CD8-positive, alpha-beta T cell (primary cell): ENCODE measurements at regions of chr6 and their contacts with region 1.

Region 1: DNA sequence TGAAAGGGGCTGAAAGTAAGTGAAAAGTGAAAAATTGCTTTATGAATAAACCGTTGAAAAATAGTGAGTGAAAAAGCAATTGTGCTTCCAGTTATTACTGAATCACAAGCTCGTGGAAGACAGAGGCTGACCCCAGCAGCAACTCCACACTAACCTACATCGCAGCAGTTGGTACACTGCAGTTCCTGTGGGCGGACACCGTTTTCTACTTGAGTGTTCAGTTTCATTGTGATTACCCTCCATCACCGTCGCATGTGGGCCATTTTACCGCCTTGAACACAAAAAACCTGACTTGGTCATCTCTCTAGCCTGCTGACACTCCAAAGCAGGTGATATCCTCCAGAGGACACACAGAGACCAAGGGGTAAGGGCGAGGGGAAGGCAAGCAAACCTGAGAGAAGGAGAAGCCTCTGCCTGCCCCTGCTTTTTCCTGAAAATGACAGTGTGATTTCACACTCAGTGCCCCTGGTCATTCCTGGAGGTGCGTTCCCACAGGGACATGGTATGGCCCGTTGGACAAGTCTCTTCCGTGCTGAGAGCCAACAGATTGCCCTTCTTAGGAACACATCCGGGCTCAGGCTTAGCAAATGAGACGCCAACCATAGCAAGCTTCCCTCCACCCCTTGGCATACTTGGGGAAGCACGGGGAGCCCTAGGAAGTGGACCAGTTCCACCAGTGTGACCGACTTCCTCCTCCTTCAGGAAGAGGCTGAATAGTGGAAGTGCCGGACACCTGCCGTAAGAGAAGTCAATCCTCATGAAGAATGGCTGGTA is 28.5 kb downstream of the PRDM1 start:
- DNase-seq: peak in 3 of 9 experiments; percentile 37 to 66 (median 60)
- ATAC-seq: peak; percentile 15
- H3K4me3 ChIP-seq: peak overlapping the region in 1 of 2 experiments; percentile 7
- H3K4me3 Mint-ChIP-seq: peak overlapping the region; percentile 55
- H3K27ac ChIP-seq: peak overlapping the region in 1 of 2 experiments; percentile 61
- H3K27ac Mint-ChIP-seq: peak overlapping the region; percentile 58
- H3K4me1 ChIP-seq: peaks cover 55% of the 10 kb centered on the region
- H3K4me1 Mint-ChIP-seq: peaks cover 57% of the 10 kb centered on the region
- H3K27me3 ChIP-seq: no peaks in the 10 kb centered on the region
- H3K27me3 Mint-ChIP-seq: peaks cover 21% of the 10 kb centered on the region
- CTCF ChIP-seq: no peak

Region 2: GRCh38 chr6:105983763-105984162 is 130.9 kb before region 1 on chr6:
- CTCF ChIA-PET with region 1: no interaction called
- POLR2A ChIA-PET with region 1: no interaction called
- intact Hi-C with region 1: no loop called
- DNase-seq: no peak
- ATAC-seq: no peak
- H3K4me3 ChIP-seq: no peak overlapping the region
- H3K4me3 Mint-ChIP-seq: no peak overlapping the region
- H3K27ac ChIP-seq: no peak overlapping the region
- H3K27ac Mint-ChIP-seq: no peak overlapping the region
- H3K4me1 ChIP-seq: peaks cover 20% of the 10 kb centered on the region
- H3K4me1 Mint-ChIP-seq: peaks cover 20% of the 10 kb centered on the region
- H3K27me3 ChIP-seq: peaks cover 23 to 26% of the 10 kb centered on the region in 2 experiments
- H3K27me3 Mint-ChIP-seq: peaks cover 67% of the 10 kb centered on the region
- CTCF ChIP-seq: no peak

Region 3: DNA sequence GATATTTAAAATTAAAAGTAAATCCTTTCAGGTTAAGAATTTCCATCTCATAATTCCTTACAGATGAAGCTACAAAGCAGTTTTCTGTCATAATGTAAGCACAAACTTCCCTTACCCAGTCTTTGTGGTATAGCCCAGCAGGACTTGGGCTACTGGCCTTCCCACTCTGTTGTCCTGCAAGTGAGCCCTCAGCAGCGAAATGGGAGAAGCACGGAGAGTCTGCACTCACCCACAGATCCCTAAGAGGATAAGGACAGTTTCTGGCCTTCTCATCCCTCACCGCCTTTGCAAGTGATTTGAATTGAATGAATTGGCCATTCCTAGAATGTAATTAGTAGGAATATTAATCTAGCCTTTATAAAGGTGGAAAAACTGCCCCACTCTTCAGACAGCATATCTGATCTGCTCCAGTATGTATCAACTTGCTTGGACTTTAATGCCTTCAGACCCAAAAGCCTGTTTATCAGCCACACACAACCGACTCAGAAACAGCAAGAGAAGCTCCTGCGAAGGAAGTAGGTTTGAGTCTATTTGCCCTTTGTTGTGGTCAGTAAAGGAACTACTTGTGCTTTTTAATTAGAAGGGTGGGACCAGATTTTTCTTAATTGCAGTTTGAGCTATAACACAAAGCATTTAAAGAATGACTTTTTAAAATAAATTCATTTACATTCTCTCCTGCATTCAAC is 58.5 kb before region 1 on chr6:
- CTCF ChIA-PET with region 1: interaction called, 3 read pairs
- POLR2A ChIA-PET with region 1: no interaction called
- intact Hi-C with region 1: loop called in 1 of 2 experiments (anchors 5 kb)
- DNase-seq: peak in 3 of 9 experiments; percentile 8 to 68 (median 54)
- ATAC-seq: peak; percentile 67
- H3K4me3 ChIP-seq: no peak overlapping the region
- H3K4me3 Mint-ChIP-seq: peak overlapping the region; percentile 3
- H3K27ac ChIP-seq: no peak overlapping the region
- H3K27ac Mint-ChIP-seq: no peak overlapping the region
- H3K4me1 ChIP-seq: peaks cover 19% of the 10 kb centered on the region
- H3K4me1 Mint-ChIP-seq: peaks cover 17% of the 10 kb centered on the region
- H3K27me3 ChIP-seq: peaks cover 0 to 2% of the 10 kb centered on the region in 2 experiments
- H3K27me3 Mint-ChIP-seq: peaks cover 2% of the 10 kb centered on the region
- CTCF ChIP-seq: no peak

Region 4: GRCh38 chr6:106069478-106069877 is 45.2 kb before region 1 on chr6:
- CTCF ChIA-PET with region 1: no interaction called
- POLR2A ChIA-PET with region 1: no interaction called
- intact Hi-C with region 1: no loop called
- DNase-seq: no peak
- ATAC-seq: no peak
- H3K4me3 ChIP-seq: no peak overlapping the region
- H3K4me3 Mint-ChIP-seq: no peak overlapping the region
- H3K27ac ChIP-seq: no peak overlapping the region
- H3K27ac Mint-ChIP-seq: no peak overlapping the region
- H3K4me1 ChIP-seq: no peaks in the 10 kb centered on the region
- H3K4me1 Mint-ChIP-seq: no peaks in the 10 kb centered on the region
- H3K27me3 ChIP-seq: no peaks in the 10 kb centered on the region
- H3K27me3 Mint-ChIP-seq: peaks cover 4% of the 10 kb centered on the region
- CTCF ChIP-seq: no peak

Region 5: DNA sequence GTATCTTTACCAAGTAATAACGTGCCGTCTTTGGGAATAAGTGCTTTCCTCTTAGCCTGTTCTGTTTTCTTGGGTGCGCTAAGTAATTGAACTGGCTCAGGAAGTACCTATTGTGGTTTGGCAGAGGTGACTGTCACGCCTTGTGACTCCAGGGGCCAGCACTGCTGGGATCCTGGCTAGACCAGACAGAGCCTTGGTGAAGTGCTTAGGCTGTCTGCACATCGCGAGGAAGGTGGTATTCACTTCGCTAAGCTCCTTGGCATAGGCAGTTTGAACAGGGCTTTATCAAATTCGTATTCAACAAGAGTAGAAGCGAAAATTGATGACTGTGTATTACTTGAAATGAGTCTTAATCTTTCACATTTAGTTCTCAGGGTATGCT is 11.0 kb before region 1 on chr6:
- CTCF ChIA-PET with region 1: interaction called, 3 read pairs
- POLR2A ChIA-PET with region 1: interaction called, 17 read pairs
- intact Hi-C with region 1: loop called (anchors 1 to 2 kb)
- DNase-seq: peak in 5 of 9 experiments; percentile 45 to 79 (median 64)
- ATAC-seq: peak; percentile 62
- H3K4me3 ChIP-seq: peak overlapping the region; percentile 29 to 73
- H3K4me3 Mint-ChIP-seq: peak overlapping the region; percentile 90
- H3K27ac ChIP-seq: peak overlapping the region in 1 of 2 experiments; percentile 79
- H3K27ac Mint-ChIP-seq: peak overlapping the region; percentile 82
- H3K4me1 ChIP-seq: peaks cover 31% of the 10 kb centered on the region
- H3K4me1 Mint-ChIP-seq: peaks cover 60% of the 10 kb centered on the region
- H3K27me3 ChIP-seq: no peaks in the 10 kb centered on the region
- H3K27me3 Mint-ChIP-seq: peaks cover 11% of the 10 kb centered on the region
- CTCF ChIP-seq: no peak

Region 6: GRCh38 chr6:106194949-106195921 is 80.6 kb after region 1 on chr6:
- CTCF ChIA-PET with region 1: no interaction called
- POLR2A ChIA-PET with region 1: no interaction called
- intact Hi-C with region 1: loop called in 1 of 2 experiments (anchors 5 kb)
- DNase-seq: peak in 6 of 9 experiments; percentile 12 to 79 (median 44)
- ATAC-seq: peak; percentile 82
- H3K4me3 ChIP-seq: peak overlapping the region in 1 of 2 experiments; percentile 12
- H3K4me3 Mint-ChIP-seq: peak overlapping the region; percentile 46
- H3K27ac ChIP-seq: peak overlapping the region; percentile 13 to 71
- H3K27ac Mint-ChIP-seq: peak overlapping the region; percentile 81
- H3K4me1 ChIP-seq: peaks cover 35% of the 10 kb centered on the region
- H3K4me1 Mint-ChIP-seq: peaks cover 37% of the 10 kb centered on the region
- H3K27me3 ChIP-seq: no peaks in the 10 kb centered on the region
- H3K27me3 Mint-ChIP-seq: no peaks in the 10 kb centered on the region
- CTCF ChIP-seq: no peak